H1 (cell line): ENCODE measurements at regions of chr6 and their contacts with region 1.

Region 1: DNA sequence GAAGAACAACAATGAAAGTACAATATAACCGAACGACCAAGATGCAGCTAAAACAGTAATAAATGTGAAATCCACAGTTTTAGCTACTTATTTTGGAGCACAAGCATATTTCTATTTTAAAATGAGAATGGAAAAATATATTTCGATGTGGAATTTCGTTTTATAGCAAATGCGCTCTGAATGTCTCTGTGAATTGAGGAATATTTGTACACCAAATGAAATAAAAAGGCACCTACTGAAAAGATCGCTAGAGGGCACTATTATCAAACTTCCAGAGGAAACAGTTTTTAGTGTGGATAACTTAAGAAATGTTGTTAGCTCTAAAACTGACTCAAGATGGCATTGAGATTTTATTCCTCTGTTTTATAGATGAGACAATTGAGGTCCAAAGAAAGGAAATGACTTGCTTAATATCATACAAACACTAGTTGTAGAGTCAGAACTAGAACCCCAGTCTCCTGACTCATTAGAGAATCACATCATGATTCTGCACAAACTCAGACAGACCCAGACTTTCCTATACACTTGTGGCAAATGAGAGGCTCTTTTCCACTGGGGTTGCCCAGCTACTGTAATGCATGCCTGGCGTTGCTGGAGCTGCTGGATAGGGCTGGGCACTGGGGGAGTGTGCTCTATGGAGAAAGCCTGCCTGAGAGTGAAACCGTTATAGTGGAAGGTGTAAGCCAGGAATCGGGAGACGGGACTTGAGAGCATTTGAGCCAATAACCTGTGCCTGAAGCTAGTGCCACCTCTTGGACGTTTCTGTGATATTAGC is 51.9 kb downstream of the GCLC start:
- DNase-seq: peak in 1 of 2 experiments; percentile 49
- H3K4me3 ChIP-seq: no peak overlapping the region
- H3K27ac ChIP-seq: no peak overlapping the region
- H3K4me1 ChIP-seq: no peaks in the 10 kb centered on the region
- H3K27me3 ChIP-seq: no peaks in the 10 kb centered on the region
- CTCF ChIP-seq: peak in 2 of 3 experiments; percentile 52; a peak in 2 of 4 replicates
- EP300 ChIP-seq: no peak
- POLR2A ChIP-seq: no peak
- RAD21 ChIP-seq: peak; percentile 71 to 75

Region 2: DNA sequence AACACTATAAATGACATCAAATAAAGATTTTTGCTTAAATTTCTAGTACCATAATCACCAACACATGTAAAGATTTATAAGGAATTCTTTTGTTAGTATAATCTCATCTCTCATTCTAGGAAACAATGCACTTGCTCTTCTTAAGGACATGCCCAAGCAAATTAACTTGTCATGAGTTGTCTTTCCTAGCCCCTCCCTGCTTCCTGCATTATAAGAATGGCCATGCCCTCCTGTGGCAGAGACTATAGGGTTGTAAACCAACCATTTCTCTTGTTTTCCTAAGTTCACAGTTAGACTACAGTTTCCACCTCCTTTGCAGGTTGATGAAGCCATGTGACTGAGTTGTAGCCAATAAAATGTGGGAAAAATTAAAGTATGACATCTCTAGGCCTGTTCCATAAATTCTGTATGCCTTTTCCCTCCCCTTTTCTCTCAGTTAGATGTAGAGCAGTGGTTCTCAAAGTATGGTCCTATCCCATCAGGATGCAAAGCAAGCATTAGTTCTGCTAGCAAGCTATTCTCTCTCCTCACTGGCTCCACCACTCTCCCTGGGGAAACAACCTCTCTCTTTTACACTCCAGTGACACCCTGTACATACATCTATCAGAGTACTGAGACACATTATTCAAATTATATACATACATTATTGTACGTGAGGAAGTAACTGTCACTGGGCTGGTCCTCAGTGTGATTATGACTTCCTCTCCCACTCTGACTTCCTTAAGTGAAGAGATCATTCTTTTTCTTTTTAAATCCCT is 1700.6 kb before region 1 on chr6:
- CTCF ChIA-PET with region 1: no interaction called
- POLR2A ChIA-PET with region 1: no interaction called
- DNase-seq: no peak
- H3K4me3 ChIP-seq: no peak overlapping the region
- H3K27ac ChIP-seq: no peak overlapping the region
- H3K4me1 ChIP-seq: no peaks in the 10 kb centered on the region
- H3K27me3 ChIP-seq: no peaks in the 10 kb centered on the region
- CTCF ChIP-seq: no peak
- EP300 ChIP-seq: no peak
- POLR2A ChIP-seq: no peak
- RAD21 ChIP-seq: 0 out of 4 replicates have a peak, but pooled peaks of 1 of the 2 experiments have one; percentile 12

Region 3: GRCh38 chr6:51805517-51805916 is 1687.5 kb before region 1 on chr6:
- CTCF ChIA-PET with region 1: no interaction called
- POLR2A ChIA-PET with region 1: no interaction called
- DNase-seq: no peak
- H3K4me3 ChIP-seq: no peak overlapping the region
- H3K27ac ChIP-seq: no peak overlapping the region
- H3K4me1 ChIP-seq: no peaks in the 10 kb centered on the region
- H3K27me3 ChIP-seq: no peaks in the 10 kb centered on the region
- CTCF ChIP-seq: no peak
- EP300 ChIP-seq: no peak
- POLR2A ChIP-seq: no peak
- RAD21 ChIP-seq: no peak

Region 4: DNA sequence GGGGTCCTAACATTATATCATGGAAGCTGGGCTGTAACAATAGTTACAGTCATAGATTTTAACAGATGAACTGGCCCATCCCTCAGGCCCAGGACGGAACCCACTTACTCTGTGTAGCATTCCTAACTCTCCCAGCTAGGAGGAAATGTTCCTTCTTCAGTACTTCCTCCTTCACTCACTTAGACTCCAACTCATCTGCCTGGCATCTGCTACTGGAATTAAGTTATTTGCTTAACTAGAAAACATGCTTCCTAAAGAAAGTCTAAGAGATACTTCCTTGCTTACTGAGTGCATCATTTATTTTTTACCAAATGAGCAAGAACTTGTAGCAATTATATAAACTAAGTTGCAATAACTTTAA is 31.4 kb after region 1 on chr6:
- CTCF ChIA-PET with region 1: interaction called, 14 read pairs
- POLR2A ChIA-PET with region 1: no interaction called
- DNase-seq: no peak
- H3K4me3 ChIP-seq: no peak overlapping the region
- H3K27ac ChIP-seq: no peak overlapping the region
- H3K4me1 ChIP-seq: peaks cover 7 to 15% (median 13%) of the 10 kb centered on the region in 4 experiments
- H3K27me3 ChIP-seq: no peaks in the 10 kb centered on the region
- CTCF ChIP-seq: no peak
- EP300 ChIP-seq: no peak
- POLR2A ChIP-seq: no peak
- RAD21 ChIP-seq: no peak

Region 5: GRCh38 chr6:53651764-53652401 is 158.8 kb after region 1 on chr6:
- CTCF ChIA-PET with region 1: interaction called, 84 read pairs
- POLR2A ChIA-PET with region 1: interaction called, 6 read pairs
- DNase-seq: peak; percentile 59 to 83
- H3K4me3 ChIP-seq: peak overlapping the region; percentile 34 to 82 (median 67)
- H3K27ac ChIP-seq: no peak overlapping the region
- H3K4me1 ChIP-seq: peaks cover 0 to 2% (median 0%) of the 10 kb centered on the region in 4 experiments; a peak in 2 of 7 replicates
- H3K27me3 ChIP-seq: peaks cover 8 to 16% (median 12%) of the 10 kb centered on the region in 4 experiments
- CTCF ChIP-seq: peak; percentile 21 to 29 (median 26)
- EP300 ChIP-seq: no peak
- POLR2A ChIP-seq: peak in 1 of 2 experiments; percentile 42; a peak in 2 of 3 replicates
- RAD21 ChIP-seq: peak in 1 of 2 experiments; percentile 29; a peak in 1 of 4 replicates

Region 6: DNA sequence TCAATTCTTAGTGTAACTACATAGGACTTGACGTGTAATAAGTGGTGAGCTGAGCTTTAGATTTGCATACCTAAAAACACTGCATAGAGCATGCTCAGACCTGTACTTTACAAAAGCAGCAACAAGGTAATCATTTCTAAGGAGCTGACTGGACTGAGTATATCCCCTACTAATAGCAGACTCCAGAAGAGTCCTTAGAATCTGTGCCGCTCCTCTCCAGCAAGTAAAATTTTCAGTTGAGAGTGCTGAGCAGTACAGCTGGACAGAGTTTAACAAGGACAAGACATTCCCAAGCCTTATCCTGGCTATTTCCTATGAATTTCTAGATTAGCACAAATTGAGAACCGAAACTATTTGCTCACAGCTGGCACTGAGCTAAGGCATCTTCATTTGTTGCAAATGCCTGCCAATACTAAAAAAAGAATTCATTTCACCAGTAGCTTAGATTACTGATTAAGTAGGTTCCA is 198.7 kb after region 1 on chr6:
- CTCF ChIA-PET with region 1: interaction called, 13 read pairs
- POLR2A ChIA-PET with region 1: no interaction called
- DNase-seq: no peak
- H3K4me3 ChIP-seq: no peak overlapping the region
- H3K27ac ChIP-seq: no peak overlapping the region
- H3K4me1 ChIP-seq: no peaks in the 10 kb centered on the region
- H3K27me3 ChIP-seq: no peaks in the 10 kb centered on the region
- CTCF ChIP-seq: no peak
- EP300 ChIP-seq: no peak
- POLR2A ChIP-seq: no peak
- RAD21 ChIP-seq: no peak

Region 7: GRCh38 chr6:53734473-53735299 is 241.6 kb after region 1 on chr6:
- CTCF ChIA-PET with region 1: interaction called, 73 read pairs
- POLR2A ChIA-PET with region 1: no interaction called
- DNase-seq: peak; percentile 29 to 78
- H3K4me3 ChIP-seq: no peak overlapping the region
- H3K27ac ChIP-seq: no peak overlapping the region
- H3K4me1 ChIP-seq: peaks cover 0 to 3% (median 0%) of the 10 kb centered on the region in 4 experiments; a peak in 1 of 7 replicates
- H3K27me3 ChIP-seq: no peaks in the 10 kb centered on the region
- CTCF ChIP-seq: peak; percentile 70 to 87 (median 79)
- EP300 ChIP-seq: no peak
- POLR2A ChIP-seq: no peak
- RAD21 ChIP-seq: peak; percentile 55 to 63